ENCODE measurements at regions of chr19 and their contacts with region 1.

Region 1: DNA sequence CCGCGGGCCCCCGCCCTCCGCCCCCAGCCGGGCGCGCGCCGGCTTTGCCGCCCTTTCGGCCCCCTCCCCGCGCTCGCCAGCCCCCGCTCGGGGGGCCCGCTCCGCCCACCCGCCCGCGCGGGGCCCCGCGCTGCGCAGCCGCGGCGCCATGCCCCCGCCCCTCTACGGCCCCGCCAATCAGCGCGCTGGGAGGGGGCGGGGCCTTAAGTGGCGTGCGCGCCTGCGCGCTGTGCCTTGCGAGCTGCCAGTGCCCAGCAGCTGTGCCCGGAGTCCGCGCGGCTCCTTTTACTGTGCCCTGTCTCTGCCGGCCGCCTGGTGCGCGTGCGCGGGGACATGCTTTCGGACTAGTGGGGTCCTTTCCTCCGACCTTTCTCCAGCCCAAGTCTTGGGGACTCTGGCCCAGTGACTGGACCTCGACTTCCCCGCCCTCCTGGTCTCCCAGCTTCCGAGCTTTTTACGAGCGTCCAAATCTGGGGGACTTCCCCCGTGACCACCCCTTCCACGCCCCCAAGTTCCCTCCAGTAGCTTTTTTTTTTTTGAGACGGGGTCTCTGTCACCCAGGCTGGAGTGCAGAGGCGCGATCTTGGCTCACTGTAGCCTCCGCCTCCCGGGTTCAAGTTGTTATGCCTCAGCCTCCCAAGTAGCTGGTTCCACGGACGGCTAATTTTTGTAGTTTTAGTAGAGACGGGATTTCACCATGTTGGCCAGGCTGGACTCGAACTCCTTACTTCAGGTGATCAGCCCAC is at the start of gene MBD3:
- DNase-seq: peak; percentile 90
- H3K4me3 Mint-ChIP-seq: peak within 1 kb of the TSS; percentile 86
- H3K27ac Mint-ChIP-seq: peak within 1 kb of the TSS; percentile 84
- H3K4me1 Mint-ChIP-seq: peaks cover 16% of the 10 kb centered on the region
- H3K27me3 Mint-ChIP-seq: no peaks in the 10 kb centered on the region
- total RNA-seq, gene MBD3: 67.7 to 71.4 TPM

Region 2: DNA sequence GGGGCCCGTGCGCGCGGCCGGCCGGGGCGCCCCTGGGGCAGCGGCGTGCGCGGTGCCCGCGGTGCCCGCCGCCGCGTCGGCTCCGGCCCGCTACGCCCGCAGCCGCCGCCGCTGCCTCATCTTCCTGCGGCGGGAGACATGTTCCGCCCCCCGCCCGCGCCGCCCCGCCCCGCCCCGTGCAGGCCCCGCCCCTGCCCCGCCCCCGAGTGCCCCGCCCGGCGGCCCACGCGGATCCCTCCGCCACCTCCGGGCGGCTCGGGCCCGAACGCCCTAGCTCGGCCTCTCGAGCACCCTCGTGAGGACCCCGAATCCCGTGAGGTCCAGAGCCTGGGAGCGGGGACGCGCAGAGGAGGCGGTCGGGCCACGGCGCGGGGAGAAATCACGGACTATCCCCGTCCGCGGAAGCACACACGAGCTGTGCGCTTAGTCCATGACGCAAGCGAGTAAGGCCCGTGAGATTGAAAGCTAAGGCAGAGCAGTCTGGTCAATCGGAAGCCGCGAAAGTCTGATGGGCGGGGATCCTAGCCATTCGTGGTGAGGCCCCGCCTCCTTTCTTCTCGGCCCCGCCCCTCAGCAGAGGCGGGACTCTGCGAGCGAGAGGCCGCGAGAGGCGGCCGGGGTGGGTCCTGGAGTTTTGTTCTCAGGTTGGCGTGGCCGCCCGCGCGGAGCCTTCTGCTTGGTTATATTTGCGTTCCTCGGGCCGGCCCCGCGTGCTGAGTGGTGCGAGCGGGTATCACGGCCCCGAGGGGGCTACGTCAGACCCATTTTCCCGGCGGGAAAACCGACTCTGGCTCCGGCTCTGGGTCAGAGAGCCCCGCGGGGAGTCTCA is 59.8 kb after region 1 on chr19 and contains the start of gene TCF3:
- CTCF ChIA-PET with region 1: interaction called, 6 read pairs
- POLR2A ChIA-PET with region 1: interaction called, 8 read pairs
- intact Hi-C with region 1: loop called (anchors 5 kb)
- DNase-seq: peak; percentile 99
- H3K4me3 Mint-ChIP-seq: peak within 1 kb of the TSS; percentile 84
- H3K27ac Mint-ChIP-seq: peak within 1 kb of the TSS; percentile 83
- H3K4me1 Mint-ChIP-seq: peaks cover 29% of the 10 kb centered on the region
- H3K27me3 Mint-ChIP-seq: no peaks in the 10 kb centered on the region
- total RNA-seq, gene TCF3: 88.9 to 95.5 TPM

Measured in activated CD4-positive, alpha-beta memory T cell treated with anti-CD3 and anti-CD28 coated beads for 36 hours (primary cell).